Common myeloid progenitor, CD34-positive (primary cell): ENCODE measurements at regions of chr21 and their contacts with region 1.

Region 1: DNA sequence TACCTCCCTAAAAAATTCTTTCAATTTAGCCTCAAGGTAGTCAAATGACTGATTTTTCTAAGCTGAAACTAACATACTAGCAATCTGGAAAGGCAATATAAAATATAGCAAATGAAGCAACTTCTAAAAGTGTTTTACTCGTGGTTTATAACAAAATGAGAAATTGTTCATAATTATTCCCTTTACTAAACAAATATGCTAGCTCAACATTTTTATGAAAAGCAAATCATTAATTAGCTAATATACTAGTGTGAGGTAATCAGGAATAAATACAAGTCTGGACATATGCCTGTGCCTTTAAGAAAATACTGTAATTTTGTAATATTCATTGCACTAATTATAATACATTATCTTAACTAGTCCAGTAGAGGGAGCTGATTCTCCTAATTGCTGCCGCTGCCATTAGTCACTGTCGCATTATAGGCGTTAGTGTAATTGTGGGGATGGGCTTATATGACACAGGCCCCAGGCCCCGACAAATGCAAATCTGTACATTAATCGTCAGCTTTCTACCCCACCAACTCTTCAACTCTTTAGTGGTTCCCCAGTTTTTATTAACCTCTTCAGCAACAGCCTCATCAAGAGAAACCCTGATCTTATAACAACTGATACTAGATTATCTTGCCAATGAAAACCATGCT is 160.9 kb downstream of the GABPA start:
- DNase-seq: peak; percentile 55 to 80 (median 73)
- H3K4me3 ChIP-seq: no peak overlapping the region
- H3K27ac ChIP-seq: no peak overlapping the region
- H3K4me1 ChIP-seq: peaks cover 6 to 21% (median 12%) of the 10 kb centered on the region in 4 experiments
- H3K27me3 ChIP-seq: no peaks in the 10 kb centered on the region

Region 2: GRCh38 chr21:26169061-26169610 is 273.5 kb after region 1 on chr21:
- CTCF ChIA-PET with region 1: interaction called, 16 read pairs
- POLR2A ChIA-PET with region 1: no interaction called
- DNase-seq: peak; percentile 75 to 90 (median 86)
- H3K4me3 ChIP-seq: peak overlapping the region; percentile 77 to 97 (median 89)
- H3K27ac ChIP-seq: no peak overlapping the region
- H3K4me1 ChIP-seq: peaks cover 9 to 38% (median 23%) of the 10 kb centered on the region in 4 experiments
- H3K27me3 ChIP-seq: no peaks in the 10 kb centered on the region